Endothelial cell of umbilical vein (primary cell): ENCODE measurements at regions of chr3 and their contacts with region 1.

Region 1: DNA sequence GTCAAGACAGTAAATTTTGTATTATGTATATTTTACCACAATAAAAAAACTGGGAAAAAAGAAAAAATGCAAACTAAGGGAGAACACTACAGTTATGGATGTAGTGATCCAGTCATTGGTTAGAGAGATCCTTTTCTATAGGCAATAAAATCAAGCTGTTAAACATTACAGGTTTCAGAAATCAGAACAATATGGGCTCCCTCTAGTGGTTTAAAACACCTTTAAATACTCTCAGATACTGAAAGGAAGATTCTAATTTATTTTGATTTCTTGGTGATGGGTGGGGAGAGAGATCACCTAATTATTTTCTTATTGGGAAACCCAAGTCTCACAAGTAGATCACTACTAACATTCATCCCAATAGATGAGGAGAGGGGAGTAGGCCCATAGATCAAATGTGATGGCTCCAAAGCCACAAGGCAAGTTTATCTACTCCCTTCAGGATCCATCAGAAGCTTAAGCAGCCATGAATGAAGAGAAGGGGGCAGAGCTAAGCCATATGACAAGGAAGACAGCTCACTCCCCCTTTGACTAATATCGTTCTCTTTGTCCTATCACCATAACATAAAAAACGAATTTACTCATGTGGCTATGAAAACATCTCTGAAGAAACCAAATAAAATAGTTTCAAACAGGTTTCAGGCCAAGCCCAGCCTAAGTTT is 118.6 kb downstream of the ANO10 start:
- DNase-seq: peak; percentile 67
- H3K4me3 ChIP-seq: no peak overlapping the region
- H3K27ac ChIP-seq: peak overlapping the region; percentile 58
- H3K4me1 ChIP-seq: peaks cover 39% of the 10 kb centered on the region
- H3K27me3 ChIP-seq: no peaks in the 10 kb centered on the region
- CTCF ChIP-seq: peak; percentile 20 to 33
- POLR2A ChIP-seq: no peak

Region 2: DNA sequence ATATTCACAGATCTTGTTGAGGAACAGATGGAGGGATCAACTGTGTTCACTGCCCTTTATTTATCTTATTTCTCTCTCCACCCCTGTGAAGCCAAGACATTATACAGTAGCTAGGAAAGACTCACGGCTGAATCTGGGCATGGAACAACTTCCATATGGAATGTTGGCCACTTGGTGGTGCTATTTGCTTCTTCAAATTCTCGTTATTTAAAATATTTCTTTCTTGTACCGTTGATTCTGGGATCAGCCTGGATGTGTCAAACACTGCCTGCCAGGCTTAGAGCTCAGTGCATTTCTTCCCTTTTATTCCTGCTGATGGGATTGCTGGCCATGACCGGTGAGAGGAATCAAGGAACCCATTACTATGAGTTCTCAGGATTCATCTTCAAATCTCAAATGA is 541.6 kb before region 1 on chr3:
- CTCF ChIA-PET with region 1: interaction called, 27 read pairs
- POLR2A ChIA-PET with region 1: no interaction called
- dilution Hi-C with region 1: no loop called
- intact Hi-C with region 1: loop called (anchors 1 kb)
- DNase-seq: peak; percentile 55
- H3K4me3 ChIP-seq: no peak overlapping the region
- H3K27ac ChIP-seq: no peak overlapping the region
- H3K4me1 ChIP-seq: no peaks in the 10 kb centered on the region
- H3K27me3 ChIP-seq: peaks cover 3 to 5% of the 10 kb centered on the region in 2 experiments
- CTCF ChIP-seq: peak; percentile 41 to 42
- POLR2A ChIP-seq: no peak

Region 3: GRCh38 chr3:43296565-43296964 is 206.6 kb before region 1 on chr3:
- CTCF ChIA-PET with region 1: interaction called, 18 read pairs
- POLR2A ChIA-PET with region 1: interaction called, 3 read pairs
- dilution Hi-C with region 1: no loop called
- intact Hi-C with region 1: no loop called
- DNase-seq: peak; percentile 24
- H3K4me3 ChIP-seq: no peak overlapping the region
- H3K27ac ChIP-seq: no peak overlapping the region
- H3K4me1 ChIP-seq: peaks cover 59% of the 10 kb centered on the region
- H3K27me3 ChIP-seq: no peaks in the 10 kb centered on the region
- CTCF ChIP-seq: no peak
- POLR2A ChIP-seq: no peak

Region 4: GRCh38 chr3:43338295-43338694 is 164.9 kb before region 1 on chr3:
- CTCF ChIA-PET with region 1: interaction called, 10 read pairs
- POLR2A ChIA-PET with region 1: no interaction called
- dilution Hi-C with region 1: no loop called
- intact Hi-C with region 1: no loop called
- DNase-seq: no peak
- H3K4me3 ChIP-seq: no peak overlapping the region
- H3K27ac ChIP-seq: no peak overlapping the region
- H3K4me1 ChIP-seq: peaks cover 2% of the 10 kb centered on the region
- H3K27me3 ChIP-seq: no peaks in the 10 kb centered on the region
- CTCF ChIP-seq: no peak
- POLR2A ChIP-seq: no peak

Region 5: DNA sequence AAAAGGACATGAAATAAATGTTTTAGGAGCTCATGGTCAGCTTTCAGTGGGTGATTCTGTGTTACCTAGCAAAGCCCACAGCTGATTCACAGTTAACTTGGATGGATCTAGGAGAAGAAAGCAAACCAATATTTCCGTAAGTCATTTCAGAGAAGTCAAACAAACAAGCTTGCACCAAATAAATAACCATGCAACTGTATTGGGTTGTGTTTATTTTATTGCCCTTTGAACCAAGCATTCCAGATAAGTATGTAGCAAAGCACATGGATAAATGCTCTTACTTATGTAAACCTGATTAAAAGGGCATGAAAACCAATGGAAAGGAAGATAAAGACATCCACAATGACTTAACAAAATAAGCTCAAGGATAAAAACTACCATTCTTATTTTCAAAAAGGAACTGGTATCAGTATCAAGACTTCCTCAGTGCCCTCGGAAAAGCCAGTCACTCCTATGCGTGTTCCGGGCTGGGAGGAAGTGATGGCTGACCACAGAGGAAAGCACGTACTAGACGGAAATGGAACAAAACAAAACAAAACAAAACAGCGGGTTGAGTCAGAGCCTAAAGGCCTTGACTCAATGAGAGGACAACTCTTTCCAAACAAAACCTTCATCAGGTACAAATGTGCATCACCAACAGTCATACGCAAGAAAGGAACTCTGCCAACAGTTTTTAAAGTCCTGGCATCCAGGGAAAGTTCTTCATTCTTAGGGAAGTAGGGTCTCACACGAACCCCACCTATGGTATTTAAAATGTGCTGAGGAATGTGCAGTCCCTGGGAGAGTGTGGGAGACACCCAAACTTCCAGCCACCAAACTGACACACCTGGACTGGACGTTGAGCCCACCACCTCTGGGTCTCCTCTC is 113.6 kb before region 1 on chr3:
- CTCF ChIA-PET with region 1: interaction called, 56 read pairs
- POLR2A ChIA-PET with region 1: interaction called, 7 read pairs
- dilution Hi-C with region 1: no loop called
- intact Hi-C with region 1: loop called (anchors 1 kb)
- DNase-seq: peak; percentile 97
- H3K4me3 ChIP-seq: no peak overlapping the region
- H3K27ac ChIP-seq: peak overlapping the region; percentile 97
- H3K4me1 ChIP-seq: peaks cover 68% of the 10 kb centered on the region
- H3K27me3 ChIP-seq: no peaks in the 10 kb centered on the region
- CTCF ChIP-seq: no peak
- POLR2A ChIP-seq: peak; percentile 90

Region 6: GRCh38 chr3:43468133-43468532 is 35.1 kb before region 1 on chr3:
- CTCF ChIA-PET with region 1: interaction called, 10 read pairs
- POLR2A ChIA-PET with region 1: no interaction called
- dilution Hi-C with region 1: no loop called
- intact Hi-C with region 1: no loop called
- DNase-seq: peak; percentile 61
- H3K4me3 ChIP-seq: no peak overlapping the region
- H3K27ac ChIP-seq: no peak overlapping the region
- H3K4me1 ChIP-seq: peaks cover 16% of the 10 kb centered on the region
- H3K27me3 ChIP-seq: no peaks in the 10 kb centered on the region
- CTCF ChIP-seq: no peak
- POLR2A ChIP-seq: no peak

Region 7: GRCh38 chr3:43531835-43532234 is 28.6 kb after region 1 on chr3:
- CTCF ChIA-PET with region 1: interaction called, 15 read pairs
- POLR2A ChIA-PET with region 1: no interaction called
- dilution Hi-C with region 1: no loop called
- intact Hi-C with region 1: no loop called
- DNase-seq: peak; percentile 23
- H3K4me3 ChIP-seq: no peak overlapping the region
- H3K27ac ChIP-seq: no peak overlapping the region
- H3K4me1 ChIP-seq: peaks cover 7% of the 10 kb centered on the region
- H3K27me3 ChIP-seq: no peaks in the 10 kb centered on the region
- CTCF ChIP-seq: no peak
- POLR2A ChIP-seq: no peak

Region 8: DNA sequence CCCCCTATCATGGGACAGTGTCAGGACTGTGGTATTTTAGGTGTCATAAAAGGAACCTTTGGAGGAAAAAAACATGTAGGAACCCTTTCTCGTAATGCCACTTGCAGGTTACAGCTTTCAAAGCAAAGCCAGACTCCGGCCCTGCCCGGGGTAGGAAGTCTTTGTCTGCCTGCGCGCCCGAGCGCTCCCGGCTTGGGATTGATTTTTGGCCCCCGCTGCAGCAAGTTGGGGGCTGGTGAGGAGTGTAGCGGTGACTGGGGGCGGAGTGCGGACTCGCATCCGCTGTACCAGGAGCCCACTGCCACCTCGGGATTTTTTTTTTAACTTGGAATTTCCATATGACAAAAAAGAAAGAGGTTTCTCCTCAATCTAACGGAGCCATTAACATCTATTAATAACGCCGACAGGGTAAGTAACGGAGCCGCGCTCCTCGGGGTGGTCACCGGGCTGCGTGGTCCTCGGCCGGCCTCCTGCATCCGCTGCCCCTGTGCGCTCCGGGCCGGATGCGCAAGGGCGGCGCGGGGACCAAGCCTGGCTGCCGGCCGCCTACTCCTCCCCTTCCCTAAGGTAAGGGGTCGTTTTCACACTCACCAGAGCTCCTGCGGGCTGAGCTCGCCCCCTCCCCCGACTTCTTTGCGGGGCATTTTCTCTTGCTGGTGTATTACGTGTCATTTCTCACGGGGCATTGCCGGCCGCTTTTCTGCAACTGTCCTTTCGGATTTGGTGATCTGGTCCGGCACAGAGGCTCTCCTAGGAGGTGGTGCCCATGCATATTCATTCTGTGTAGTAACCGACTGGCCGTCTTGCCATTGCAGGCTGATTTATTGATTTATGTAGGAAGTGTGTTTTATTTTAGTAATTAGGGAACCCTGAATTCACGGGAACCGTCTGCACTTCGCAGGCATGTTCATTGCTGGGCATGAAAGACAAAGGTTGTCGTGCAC is 518.7 kb after region 1 on chr3:
- CTCF ChIA-PET with region 1: no interaction called
- POLR2A ChIA-PET with region 1: no interaction called
- dilution Hi-C with region 1: no loop called
- intact Hi-C with region 1: no loop called
- DNase-seq: no peak
- H3K4me3 ChIP-seq: no peak overlapping the region
- H3K27ac ChIP-seq: no peak overlapping the region
- H3K4me1 ChIP-seq: no peaks in the 10 kb centered on the region
- H3K27me3 ChIP-seq: peaks cover 27 to 46% of the 10 kb centered on the region in 2 experiments
- CTCF ChIP-seq: no peak
- POLR2A ChIP-seq: no peak